Psoas muscle (tissue), 8 donors: ENCODE measurements at regions of chr11 and their contacts with region 1.

Region 1: DNA sequence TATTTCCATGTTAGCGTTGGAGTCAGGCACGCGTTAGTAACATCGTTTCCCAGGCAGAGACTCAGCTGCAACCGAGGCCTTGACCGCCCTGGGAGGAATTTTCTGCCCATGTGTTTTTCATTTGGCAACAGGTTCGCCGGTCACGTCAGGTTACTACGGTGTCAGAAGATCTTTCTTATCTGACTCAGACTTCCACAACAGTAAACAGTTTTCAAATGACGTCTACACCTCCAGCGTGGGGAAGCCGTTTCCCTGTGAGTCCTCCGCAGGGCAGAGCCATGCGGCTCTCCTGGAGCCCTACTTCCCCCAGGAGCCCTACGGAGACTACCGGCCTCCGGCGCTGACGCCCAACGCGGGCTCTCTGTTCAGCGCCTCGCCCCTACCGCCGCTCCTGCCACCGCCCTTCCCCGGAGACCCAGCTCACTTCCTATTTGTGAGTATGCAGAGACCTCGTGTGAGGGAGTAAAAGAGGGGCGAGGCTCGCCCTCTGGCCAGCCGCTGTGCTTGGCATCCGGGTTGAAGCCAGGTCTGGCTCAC is 14.3 kb upstream of the POU2AF3 start:
- DNase-seq: peak in 1 of 2 donors; percentile 85
- ATAC-seq: peak; percentile 76 to 94 (median 90)
- H3K4me3 ChIP-seq: peak overlapping the region; percentile 17
- H3K27ac ChIP-seq: peak overlapping the region; percentile 80
- H3K4me1 ChIP-seq: peaks cover 5% of the 10 kb centered on the region
- H3K27me3 ChIP-seq: no peaks in the 10 kb centered on the region
- CTCF ChIP-seq: no peak

Region 2: GRCh38 chr11:111336582-111337256 is 52.7 kb after region 1 on chr11:
- intact Hi-C with region 1: loop called in 1 of 2 experiments (anchors 10 kb)
- DNase-seq: no peak
- ATAC-seq: no peak
- H3K4me3 ChIP-seq: no peak overlapping the region
- H3K27ac ChIP-seq: no peak overlapping the region
- H3K4me1 ChIP-seq: no peaks in the 10 kb centered on the region
- H3K27me3 ChIP-seq: no peaks in the 10 kb centered on the region
- CTCF ChIP-seq: no peak

Region 3: GRCh38 chr11:111422494-111423249 is 138.7 kb after region 1 on chr11:
- intact Hi-C with region 1: loop called (anchors 1 to 2 kb)
- DNase-seq: peak; percentile 37 to 68
- ATAC-seq: peak; percentile 67 to 86 (median 80)
- H3K4me3 ChIP-seq: no peak overlapping the region
- H3K27ac ChIP-seq: no peak overlapping the region
- H3K4me1 ChIP-seq: peaks cover 14% of the 10 kb centered on the region
- H3K27me3 ChIP-seq: no peaks in the 10 kb centered on the region
- CTCF ChIP-seq: peak; percentile 66

Region 4: GRCh38 chr11:111435046-111435698 is 151.2 kb after region 1 on chr11:
- intact Hi-C with region 1: no loop called
- DNase-seq: no peak
- ATAC-seq: peak; percentile 19 to 45 (median 28)
- H3K4me3 ChIP-seq: no peak overlapping the region
- H3K27ac ChIP-seq: no peak overlapping the region
- H3K4me1 ChIP-seq: no peaks in the 10 kb centered on the region
- H3K27me3 ChIP-seq: no peaks in the 10 kb centered on the region
- CTCF ChIP-seq: no peak

Region 5: DNA sequence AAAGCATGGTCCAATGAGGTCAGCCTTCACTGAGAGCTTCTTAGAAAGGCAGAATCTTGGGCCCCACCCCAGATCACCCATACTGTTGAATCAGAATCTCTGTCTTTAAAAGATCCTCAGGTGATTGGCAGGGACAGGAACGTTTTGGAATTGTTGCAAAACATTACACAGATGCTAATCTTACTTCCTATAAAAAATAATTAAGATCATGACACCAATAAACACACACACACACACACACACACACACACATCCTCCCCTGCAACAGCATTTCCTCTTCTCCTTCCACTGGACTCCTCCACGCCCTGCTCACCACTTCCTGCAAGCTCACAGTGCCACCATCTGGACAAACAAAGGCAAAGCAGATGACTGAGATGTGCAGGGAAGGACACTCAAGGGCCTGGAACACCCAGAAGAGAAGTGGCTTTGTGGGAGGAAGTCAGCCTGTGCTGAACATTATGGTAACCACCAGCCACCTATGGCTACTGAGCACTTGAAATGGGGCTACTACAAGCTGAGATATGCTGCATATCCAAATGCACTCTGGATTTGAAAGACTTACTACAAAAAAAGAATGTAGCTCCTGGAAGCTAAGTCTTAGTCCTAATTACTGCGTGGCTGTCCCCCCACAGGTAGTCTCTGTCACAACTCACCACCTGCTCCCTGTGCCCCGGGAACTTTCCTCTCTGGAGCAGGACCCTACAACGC is 162.5 kb after region 1 on chr11:
- intact Hi-C with region 1: loop called (anchors 1 to 2 kb)
- DNase-seq: peak; percentile 61 to 83
- ATAC-seq: peak; percentile 93 to 98 (median 95)
- H3K4me3 ChIP-seq: no peak overlapping the region
- H3K27ac ChIP-seq: no peak overlapping the region
- H3K4me1 ChIP-seq: peaks cover 19% of the 10 kb centered on the region
- H3K27me3 ChIP-seq: no peaks in the 10 kb centered on the region
- CTCF ChIP-seq: peak; percentile 75